ENCODE measurements at regions of chr1 and their contacts with region 1.

Region 1: DNA sequence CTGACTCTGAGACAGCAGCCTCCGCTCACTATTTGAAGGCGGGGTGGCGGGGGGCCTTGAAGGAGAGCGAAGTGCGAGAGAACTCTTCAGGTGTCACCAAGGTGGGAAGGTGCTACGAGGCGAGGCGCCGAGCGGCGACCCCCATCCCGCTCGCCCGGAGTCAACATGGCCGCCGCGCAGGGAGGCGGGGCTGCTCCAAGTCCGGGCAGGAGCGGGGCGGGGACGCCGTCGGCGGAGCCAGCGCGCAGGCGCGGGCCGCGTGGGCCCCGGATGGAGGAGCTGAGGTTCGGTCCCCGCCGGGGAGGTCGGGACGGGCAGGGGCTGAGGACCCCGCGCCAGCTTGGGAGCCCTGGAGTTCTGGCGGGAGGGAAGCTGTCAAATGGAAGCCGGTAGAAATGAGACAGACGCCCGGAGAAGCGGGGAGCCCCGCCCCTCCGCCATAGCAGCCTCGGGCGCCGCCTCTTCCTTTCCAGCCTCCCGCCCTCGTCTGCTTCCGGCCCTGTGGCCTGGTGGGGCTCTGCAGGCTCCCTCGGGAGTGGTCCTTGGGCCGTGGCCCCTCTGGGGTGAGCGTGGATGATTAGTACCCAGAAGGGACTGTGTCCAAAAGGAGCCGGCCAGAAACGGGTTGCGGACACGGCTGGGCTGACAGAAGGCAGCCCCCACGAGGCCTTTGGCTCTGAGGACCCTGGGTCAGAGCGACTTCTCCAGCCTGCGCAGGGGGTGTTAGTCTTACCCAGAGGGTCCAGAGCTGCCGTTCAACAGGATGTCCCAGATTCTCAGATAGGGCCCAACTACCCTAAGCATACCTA is at the start of gene PIGV:
- DNase-seq: peak; percentile 55
- ATAC-seq: peak; percentile 82
- H3K4me3 ChIP-seq: peak within 1 kb of the TSS; percentile 55 to 94
- H3K27ac ChIP-seq: peak within 1 kb of the TSS; percentile 98
- H3K4me1 ChIP-seq: peaks cover 21 to 50% of the 10 kb centered on the region in 2 experiments
- H3K27me3 ChIP-seq: no peaks in the 10 kb centered on the region
- CTCF ChIP-seq: no peak
- POLR2A ChIP-seq: no peak
- RAD21 ChIP-seq: no peak
- total RNA-seq, gene PIGV: 13.2 TPM

Region 2: DNA sequence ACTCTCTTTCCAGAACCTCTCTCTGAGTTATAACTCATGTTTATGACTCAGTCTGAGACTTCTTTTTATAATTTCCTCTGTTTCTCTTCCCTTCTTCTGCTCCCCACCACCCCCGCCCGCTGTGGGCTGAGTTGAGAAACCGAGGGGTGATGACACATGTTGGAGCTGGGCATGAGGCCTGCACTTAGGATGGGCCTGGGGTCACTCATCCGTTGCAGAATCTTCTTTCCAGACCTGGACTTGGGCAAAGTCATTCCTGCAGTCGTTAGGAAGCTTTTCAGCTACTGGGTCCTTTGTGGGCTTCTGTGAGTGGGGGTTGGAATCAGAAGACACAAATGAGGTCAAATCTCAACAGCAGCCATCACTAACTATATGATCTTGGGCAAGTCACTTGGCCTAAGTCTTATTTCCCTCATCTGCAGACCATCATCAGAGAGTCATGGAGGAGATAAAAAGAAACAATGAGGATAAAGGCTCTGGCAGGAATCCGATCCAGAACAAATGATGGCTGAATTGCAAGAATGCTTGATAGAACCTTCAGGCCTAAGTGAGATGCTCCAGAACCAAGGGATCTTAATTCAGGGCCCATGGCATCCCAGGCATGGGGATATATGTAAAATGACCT is 205.0 kb before region 1 on chr1:
- CTCF ChIA-PET with region 1: no interaction called
- POLR2A ChIA-PET with region 1: no interaction called
- RAD21 ChIA-PET with region 1: no interaction called
- intact Hi-C with region 1: no loop called
- DNase-seq: no peak
- ATAC-seq: no peak
- H3K4me3 ChIP-seq: no peak overlapping the region
- H3K27ac ChIP-seq: no peak overlapping the region
- H3K4me1 ChIP-seq: peaks cover 0 to 4% of the 10 kb centered on the region in 2 experiments; a peak in 1 of 4 replicates
- H3K27me3 ChIP-seq: no peaks in the 10 kb centered on the region
- CTCF ChIP-seq: no peak
- POLR2A ChIP-seq: no peak
- RAD21 ChIP-seq: no peak

Region 3: GRCh38 chr1:26602378-26602959 is 185.4 kb before region 1 on chr1:
- CTCF ChIA-PET with region 1: interaction called, 117 read pairs
- POLR2A ChIA-PET with region 1: interaction called, 19 read pairs
- RAD21 ChIA-PET with region 1: interaction called, 15 to 16 read pairs
- intact Hi-C with region 1: loop called (anchors 1 kb)
- DNase-seq: peak; percentile 51
- ATAC-seq: 0 out of 2 replicates have a peak, but pooled peaks have one; percentile 38
- H3K4me3 ChIP-seq: no peak overlapping the region
- H3K27ac ChIP-seq: no peak overlapping the region
- H3K4me1 ChIP-seq: peaks cover 0 to 10% of the 10 kb centered on the region in 2 experiments; a peak in 3 of 4 replicates
- H3K27me3 ChIP-seq: no peaks in the 10 kb centered on the region; the same call in 1 of the 2 replicates
- CTCF ChIP-seq: peak; percentile 77 to 95 (median 92)
- POLR2A ChIP-seq: no peak
- RAD21 ChIP-seq: peak; percentile 99

Region 4: DNA sequence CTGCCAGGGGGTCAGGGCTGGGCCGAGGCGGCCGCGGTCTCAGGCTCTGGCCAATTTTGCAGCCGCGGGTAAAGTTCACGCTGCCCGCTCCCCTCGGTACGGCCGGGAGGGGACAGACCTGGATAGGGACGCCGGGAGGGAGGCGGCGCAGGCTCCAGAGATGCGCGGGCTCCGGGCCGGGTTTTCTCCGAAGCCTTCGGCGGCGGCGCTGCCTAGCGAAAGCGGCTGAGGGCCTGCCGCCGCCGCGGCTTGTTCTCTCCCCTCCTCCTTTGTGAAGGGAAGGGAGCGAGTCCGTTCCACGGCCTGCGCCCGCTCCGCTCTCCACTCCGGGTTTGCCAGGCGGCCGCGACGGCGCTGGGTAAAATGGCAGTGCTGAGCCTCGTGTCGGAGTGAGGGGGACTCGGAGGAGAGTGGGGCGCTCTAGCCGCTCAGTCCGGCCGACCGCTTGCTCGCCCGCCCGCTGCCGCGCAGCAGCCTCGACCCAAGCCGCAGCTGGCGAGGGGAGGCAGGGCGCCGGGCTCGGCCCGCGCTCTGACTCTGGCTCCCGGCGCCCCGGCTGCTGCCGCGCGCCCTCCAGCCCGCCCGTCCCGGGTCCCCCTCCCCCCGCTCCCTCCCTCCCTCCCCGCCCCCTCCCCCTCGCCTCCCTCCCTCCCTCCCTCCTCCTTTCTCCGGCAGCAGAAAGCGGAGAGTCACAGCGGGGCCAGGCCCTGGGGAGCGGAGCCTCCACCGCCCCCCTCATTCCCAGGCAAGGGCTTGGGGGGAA is 92.4 kb before region 1 on chr1 and contains the start of gene ARID1A:
- CTCF ChIA-PET with region 1: interaction called, 19 read pairs
- POLR2A ChIA-PET with region 1: interaction called, 15 read pairs
- RAD21 ChIA-PET with region 1: interaction called in 1 of 2 experiments, 5 read pairs
- intact Hi-C with region 1: loop called (anchors 1 kb)
- DNase-seq: peak; percentile 92
- ATAC-seq: peak; percentile 51
- H3K4me3 ChIP-seq: peak within 1 kb of the TSS; percentile 60 to 64
- H3K27ac ChIP-seq: peak within 1 kb of the TSS; percentile 94
- H3K4me1 ChIP-seq: peaks cover 27 to 76% of the 10 kb centered on the region in 2 experiments
- H3K27me3 ChIP-seq: no peaks in the 10 kb centered on the region
- CTCF ChIP-seq: no peak
- POLR2A ChIP-seq: no peak
- RAD21 ChIP-seq: no peak
- total RNA-seq, gene ARID1A: 62.8 TPM

Region 5: GRCh38 chr1:26799479-26800142 is 11.7 kb after region 1 on chr1:
- CTCF ChIA-PET with region 1: interaction called, 20 read pairs
- POLR2A ChIA-PET with region 1: interaction called, 5 read pairs
- RAD21 ChIA-PET with region 1: no interaction called
- intact Hi-C with region 1: no loop called
- DNase-seq: peak; percentile 47
- ATAC-seq: peak; percentile 85
- H3K4me3 ChIP-seq: peak overlapping the region in 1 of 2 experiments; percentile 14; a peak in 2 of 4 replicates
- H3K27ac ChIP-seq: peak overlapping the region; percentile 28
- H3K4me1 ChIP-seq: peaks cover 16 to 26% of the 10 kb centered on the region in 2 experiments
- H3K27me3 ChIP-seq: no peaks in the 10 kb centered on the region
- CTCF ChIP-seq: no peak
- POLR2A ChIP-seq: no peak
- RAD21 ChIP-seq: no peak; the same call in 1 of the 2 replicates

Region 6: DNA sequence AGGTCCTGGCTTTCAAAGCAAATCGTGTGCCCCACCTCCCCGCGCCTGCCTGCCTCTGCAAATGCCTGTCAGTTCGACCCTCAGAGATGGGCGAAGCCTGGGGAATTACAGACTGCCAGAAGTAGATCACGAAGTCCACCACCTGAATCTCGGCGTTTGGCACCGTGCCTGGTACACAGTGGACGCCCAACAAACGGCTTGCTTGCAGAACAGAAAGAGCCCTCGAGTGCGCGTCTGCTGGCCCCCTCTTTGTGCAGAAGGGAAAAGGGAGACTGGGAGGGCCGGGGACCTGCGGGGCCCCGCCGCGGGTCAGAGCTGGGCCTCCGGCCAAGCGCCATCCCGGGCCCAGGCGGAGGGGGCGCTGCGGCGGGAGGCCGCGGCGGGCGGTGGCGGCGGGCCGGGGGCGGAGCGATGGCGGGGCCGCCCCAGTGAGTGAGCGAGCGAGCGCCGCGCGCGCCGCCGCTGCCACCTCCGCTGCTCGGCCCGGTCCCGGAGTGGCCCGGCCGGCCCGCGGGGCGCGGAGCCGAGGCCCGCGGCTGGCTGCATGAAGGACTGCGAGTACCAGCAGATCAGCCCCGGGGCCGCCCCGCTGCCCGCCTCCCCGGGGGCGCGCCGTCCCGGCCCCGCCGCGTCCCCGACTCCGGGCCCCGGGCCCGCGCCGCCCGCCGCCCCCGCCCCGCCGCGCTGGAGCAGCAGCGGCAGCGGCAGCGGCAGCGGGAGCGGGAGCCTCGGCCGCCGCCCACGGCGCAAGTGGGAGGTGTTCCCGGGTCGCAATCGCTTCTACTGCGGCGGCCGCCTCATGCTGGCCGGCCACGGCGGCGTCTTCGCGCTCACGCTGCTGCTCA is 38.6 kb after region 1 on chr1 and contains the start of gene ZDHHC18:
- CTCF ChIA-PET with region 1: no interaction called
- POLR2A ChIA-PET with region 1: no interaction called
- RAD21 ChIA-PET with region 1: no interaction called
- intact Hi-C with region 1: no loop called
- DNase-seq: no peak
- ATAC-seq: peak; percentile 89
- H3K4me3 ChIP-seq: peak within 1 kb of the TSS; percentile 67 to 70
- H3K27ac ChIP-seq: peak within 1 kb of the TSS; percentile 71
- H3K4me1 ChIP-seq: peaks cover 23 to 43% of the 10 kb centered on the region in 2 experiments
- H3K27me3 ChIP-seq: no peaks in the 10 kb centered on the region
- CTCF ChIP-seq: peak in 2 of 3 experiments; percentile 31 to 47; a peak in 3 of 6 replicates
- POLR2A ChIP-seq: peak; percentile 82
- RAD21 ChIP-seq: no peak
- total RNA-seq, gene ZDHHC18: 24.4 TPM

Measured in HCT116 (cell line).